SK-N-SH (cell line): ENCODE measurements at regions of chr6 and their contacts with region 1.

Region 1: GRCh38 chr6:25717866-25718740 is 36.4 kb upstream of the SLC17A4 start:
- DNase-seq: peak; percentile 44
- H3K4me3 ChIP-seq: no peak overlapping the region
- H3K27ac ChIP-seq: no peak overlapping the region
- H3K4me1 ChIP-seq: peaks cover 0 to 10% of the 10 kb centered on the region in 2 experiments; a peak in 1 of 4 replicates
- H3K27me3 ChIP-seq: no peaks in the 10 kb centered on the region
- CTCF ChIP-seq: peak; percentile 79
- EP300 ChIP-seq: no peak
- RAD21 ChIP-seq: peak; percentile 72

Region 2: GRCh38 chr6:25223490-25223991 is 494.6 kb before region 1 on chr6:
- CTCF ChIA-PET with region 1: interaction called, 12 read pairs
- POLR2A ChIA-PET with region 1: no interaction called
- DNase-seq: peak; percentile 64
- H3K4me3 ChIP-seq: peak overlapping the region; percentile 21 to 39
- H3K27ac ChIP-seq: peak overlapping the region in 1 of 2 experiments; percentile 39; a peak in 1 of 4 replicates
- H3K4me1 ChIP-seq: peaks cover 3 to 29% of the 10 kb centered on the region in 2 experiments; a peak in 3 of 4 replicates
- H3K27me3 ChIP-seq: no peaks in the 10 kb centered on the region
- CTCF ChIP-seq: peak; percentile 99
- EP300 ChIP-seq: no peak
- RAD21 ChIP-seq: peak; percentile 95

Region 3: GRCh38 chr6:25706314-25707014 is 11.6 kb before region 1 on chr6:
- CTCF ChIA-PET with region 1: interaction called, 11 read pairs
- POLR2A ChIA-PET with region 1: no interaction called
- DNase-seq: peak; percentile 49
- H3K4me3 ChIP-seq: no peak overlapping the region
- H3K27ac ChIP-seq: no peak overlapping the region
- H3K4me1 ChIP-seq: peaks cover 0 to 4% of the 10 kb centered on the region in 2 experiments; a peak in 1 of 4 replicates
- H3K27me3 ChIP-seq: no peaks in the 10 kb centered on the region
- CTCF ChIP-seq: no peak
- EP300 ChIP-seq: 0 out of 4 replicates have a peak, but pooled peaks of 1 of the 2 experiments have one; percentile 13
- RAD21 ChIP-seq: no peak

Region 4: GRCh38 chr6:25732468-25733198 is 14.5 kb after region 1 on chr6:
- CTCF ChIA-PET with region 1: interaction called, 10 read pairs
- POLR2A ChIA-PET with region 1: no interaction called
- DNase-seq: no peak
- H3K4me3 ChIP-seq: no peak overlapping the region
- H3K27ac ChIP-seq: no peak overlapping the region
- H3K4me1 ChIP-seq: no peaks in the 10 kb centered on the region
- H3K27me3 ChIP-seq: no peaks in the 10 kb centered on the region
- CTCF ChIP-seq: no peak
- EP300 ChIP-seq: no peak
- RAD21 ChIP-seq: no peak

Region 5: DNA sequence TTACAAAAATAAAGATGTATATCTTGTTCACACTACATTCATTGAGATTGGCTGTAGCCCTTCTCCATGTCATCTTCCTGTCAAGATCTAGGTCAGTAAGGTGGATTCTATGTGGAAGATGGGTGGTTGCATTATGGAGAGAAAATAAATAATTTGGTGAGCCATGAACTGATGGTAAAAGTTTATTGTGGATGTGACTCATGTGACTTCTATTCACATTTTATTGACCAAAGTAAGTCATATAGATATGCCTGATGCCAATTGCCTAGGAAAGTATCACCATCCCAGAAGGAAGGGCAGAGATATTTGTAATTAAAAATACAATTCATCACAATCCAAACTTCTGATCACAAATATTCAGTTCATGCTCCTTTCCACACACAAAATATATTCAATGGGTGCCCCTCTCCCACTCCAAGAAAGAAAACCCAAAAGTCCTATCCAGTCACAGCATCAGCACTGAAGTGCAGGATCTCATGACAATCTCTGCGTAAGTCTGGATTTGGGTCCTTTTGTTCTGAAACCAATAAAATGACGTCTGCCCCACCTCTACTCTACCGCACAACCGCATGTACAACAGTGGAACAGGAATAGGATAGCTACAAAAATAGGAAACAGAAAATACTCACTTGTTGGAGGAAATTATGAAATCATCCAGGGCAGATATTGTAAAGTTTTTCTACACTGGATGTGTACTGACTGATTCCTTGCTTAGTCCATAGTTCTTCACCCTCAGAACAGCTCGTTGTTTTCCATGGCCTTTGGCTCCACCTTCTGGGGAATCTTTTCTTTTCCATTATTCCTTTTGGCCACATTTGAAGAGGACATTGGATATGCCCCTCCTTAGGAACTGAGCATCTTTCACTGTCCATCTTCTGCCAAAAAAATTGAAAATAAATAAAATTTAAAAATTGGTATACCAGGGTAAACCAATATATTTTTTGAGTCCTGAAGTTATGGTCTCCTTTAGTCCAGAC is 172.1 kb after region 1 on chr6:
- CTCF ChIA-PET with region 1: interaction called, 19 read pairs
- POLR2A ChIA-PET with region 1: no interaction called
- DNase-seq: peak; percentile 58
- H3K4me3 ChIP-seq: no peak overlapping the region; a peak in 1 of 4 replicates
- H3K27ac ChIP-seq: no peak overlapping the region
- H3K4me1 ChIP-seq: no peaks in the 10 kb centered on the region
- H3K27me3 ChIP-seq: no peaks in the 10 kb centered on the region
- CTCF ChIP-seq: peak; percentile 57
- EP300 ChIP-seq: no peak
- RAD21 ChIP-seq: peak; percentile 95

Region 6: DNA sequence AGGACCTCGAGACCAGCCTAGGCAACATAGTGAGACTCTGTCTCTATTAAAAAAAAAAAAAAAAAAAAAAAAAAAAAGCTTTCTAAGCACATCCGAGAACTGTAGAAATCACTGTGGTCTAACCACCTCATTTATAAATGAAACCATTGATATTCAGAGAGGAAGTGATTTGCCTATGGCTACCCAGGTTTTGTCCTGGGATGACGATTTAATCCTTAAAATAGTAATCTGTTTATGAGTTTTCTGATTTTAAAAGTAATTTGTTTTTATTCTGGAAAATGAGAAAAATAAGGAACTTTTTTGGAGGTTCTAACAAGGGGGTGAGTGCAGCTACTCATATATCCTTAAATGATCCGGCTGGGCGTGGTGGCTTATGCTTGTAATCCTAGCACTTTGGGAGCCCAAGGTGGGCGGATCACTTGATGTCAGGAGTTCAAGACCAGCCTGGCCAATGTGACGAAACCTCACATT is 640.4 kb after region 1 on chr6:
- CTCF ChIA-PET with region 1: no interaction called
- POLR2A ChIA-PET with region 1: no interaction called
- DNase-seq: no peak
- H3K4me3 ChIP-seq: no peak overlapping the region
- H3K27ac ChIP-seq: no peak overlapping the region
- H3K4me1 ChIP-seq: no peaks in the 10 kb centered on the region
- H3K27me3 ChIP-seq: no peaks in the 10 kb centered on the region
- CTCF ChIP-seq: no peak
- EP300 ChIP-seq: no peak
- RAD21 ChIP-seq: no peak